Aorta (tissue), 5 donors: ENCODE measurements at regions of chr10 and their contacts with region 1.

Region 1: DNA sequence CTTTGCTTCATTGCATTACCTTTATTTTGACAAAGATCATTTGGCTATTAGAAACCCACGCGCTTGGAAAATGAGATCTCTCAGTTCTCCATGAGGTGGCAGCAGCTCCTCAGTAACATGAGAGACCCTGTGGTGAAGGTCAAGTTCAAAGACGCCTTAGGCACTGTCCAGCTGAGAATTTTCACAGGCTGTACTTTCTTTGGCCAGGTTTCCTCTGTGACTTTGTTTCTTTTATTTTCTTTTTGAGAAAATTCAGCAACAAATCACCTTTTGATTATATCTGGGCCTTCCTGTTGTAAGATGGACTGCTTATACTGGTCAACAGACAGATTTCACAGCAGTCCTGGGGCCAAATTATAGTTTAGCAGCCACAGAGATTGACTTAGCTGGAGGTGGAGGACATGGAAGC is 54.5 kb downstream of the RAB18 start:
- DNase-seq: peak in 1 of 2 donors; percentile 55
- ATAC-seq: no peak
- H3K4me3 ChIP-seq: no peak overlapping the region
- H3K27ac ChIP-seq: no peak overlapping the region
- H3K4me1 ChIP-seq: no peaks in the 10 kb centered on the region
- H3K27me3 ChIP-seq: no peaks in the 10 kb centered on the region

Region 2: GRCh38 chr10:27319752-27320561 is 238.7 kb before region 1 on chr10:
- intact Hi-C with region 1: no loop called
- DNase-seq: peak; percentile 67 to 86
- ATAC-seq: peak; percentile 68
- H3K4me3 ChIP-seq: no peak overlapping the region
- H3K27ac ChIP-seq: no peak overlapping the region
- H3K4me1 ChIP-seq: no peaks in the 10 kb centered on the region
- H3K27me3 ChIP-seq: no peaks in the 10 kb centered on the region

Region 3: DNA sequence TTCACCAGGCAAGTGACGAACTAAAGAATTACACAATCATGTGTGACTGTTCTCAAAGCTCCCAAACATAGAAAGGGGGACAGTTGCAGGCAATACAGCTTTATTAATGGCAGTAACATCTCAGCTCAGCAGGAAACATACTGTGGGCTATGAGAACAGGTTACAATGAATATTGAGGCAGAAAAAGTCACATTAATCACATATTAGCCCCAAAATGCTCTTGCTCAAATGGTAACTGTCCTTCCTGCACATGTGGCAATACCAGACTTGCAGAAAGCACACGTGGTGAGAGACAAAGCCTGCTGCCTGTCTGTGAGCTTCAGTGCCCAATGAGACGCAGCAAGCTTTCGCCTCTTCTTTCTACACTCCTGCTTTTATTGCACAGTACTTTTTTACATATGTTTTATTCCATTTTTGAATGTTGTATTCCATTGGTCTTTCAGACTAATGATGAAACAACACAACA is 213.1 kb before region 1 on chr10:
- intact Hi-C with region 1: no loop called
- DNase-seq: no peak
- ATAC-seq: no peak
- H3K4me3 ChIP-seq: no peak overlapping the region
- H3K27ac ChIP-seq: no peak overlapping the region
- H3K4me1 ChIP-seq: no peaks in the 10 kb centered on the region
- H3K27me3 ChIP-seq: no peaks in the 10 kb centered on the region

Region 4: GRCh38 chr10:27661514-27662286 is 103.1 kb after region 1 on chr10:
- intact Hi-C with region 1: loop called (anchors 1 to 5 kb)
- DNase-seq: no peak
- ATAC-seq: no peak
- H3K4me3 ChIP-seq: no peak overlapping the region
- H3K27ac ChIP-seq: no peak overlapping the region
- H3K4me1 ChIP-seq: peaks cover 0 to 3% of the 10 kb centered on the region in 2 donors
- H3K27me3 ChIP-seq: no peaks in the 10 kb centered on the region